Right cardiac atrium (tissue), 5 donors: ENCODE measurements at regions of chr12 and their contacts with region 1.

Region 1: GRCh38 chr12:108816652-108817335 is 40.6 kb downstream of the SSH1 start:
- DNase-seq: peak; percentile 59 to 87 (median 82)
- ATAC-seq: peak; percentile 39 to 59
- H3K4me3 ChIP-seq: no peak overlapping the region
- H3K27ac ChIP-seq: peak overlapping the region; percentile 70
- H3K4me1 ChIP-seq: peaks cover 24% of the 10 kb centered on the region
- H3K27me3 ChIP-seq: no peaks in the 10 kb centered on the region

Region 2: GRCh38 chr12:108914121-108914531 is 97.3 kb after region 1 on chr12:
- intact Hi-C with region 1: no loop called
- DNase-seq: no peak
- ATAC-seq: no peak
- H3K4me3 ChIP-seq: no peak overlapping the region
- H3K27ac ChIP-seq: no peak overlapping the region
- H3K4me1 ChIP-seq: no peaks in the 10 kb centered on the region
- H3K27me3 ChIP-seq: no peaks in the 10 kb centered on the region

Region 3: GRCh38 chr12:108950991-108951739 is 134.4 kb after region 1 on chr12:
- intact Hi-C with region 1: loop called in 1 of 4 experiments (anchors 10 kb)
- DNase-seq: peak; percentile 44 to 85 (median 75)
- ATAC-seq: peak; percentile 66 to 69
- H3K4me3 ChIP-seq: no peak overlapping the region
- H3K27ac ChIP-seq: no peak overlapping the region
- H3K4me1 ChIP-seq: no peaks in the 10 kb centered on the region
- H3K27me3 ChIP-seq: no peaks in the 10 kb centered on the region